Breast epithelium (tissue), 4 donors: ENCODE measurements at regions of chr7 and their contacts with region 1.

Region 1: GRCh38 chr7:726084-726853 is at the start of gene DNAAF5:
- DNase-seq: peak; percentile 53 to 79
- H3K4me3 ChIP-seq: peak within 1 kb of the TSS; percentile 78 to 97 (median 96)
- H3K27ac ChIP-seq: peak within 1 kb of the TSS; percentile 33 to 77
- H3K4me1 ChIP-seq: peaks cover 4 to 8% of the 10 kb centered on the region in 2 donors
- H3K27me3 ChIP-seq: no peaks in the 10 kb centered on the region
- CTCF ChIP-seq: no peak
- POLR2A ChIP-seq: no peak
- total RNA-seq, gene DNAAF5: 14.1 to 29.8 (median 23.6) TPM

Region 2: DNA sequence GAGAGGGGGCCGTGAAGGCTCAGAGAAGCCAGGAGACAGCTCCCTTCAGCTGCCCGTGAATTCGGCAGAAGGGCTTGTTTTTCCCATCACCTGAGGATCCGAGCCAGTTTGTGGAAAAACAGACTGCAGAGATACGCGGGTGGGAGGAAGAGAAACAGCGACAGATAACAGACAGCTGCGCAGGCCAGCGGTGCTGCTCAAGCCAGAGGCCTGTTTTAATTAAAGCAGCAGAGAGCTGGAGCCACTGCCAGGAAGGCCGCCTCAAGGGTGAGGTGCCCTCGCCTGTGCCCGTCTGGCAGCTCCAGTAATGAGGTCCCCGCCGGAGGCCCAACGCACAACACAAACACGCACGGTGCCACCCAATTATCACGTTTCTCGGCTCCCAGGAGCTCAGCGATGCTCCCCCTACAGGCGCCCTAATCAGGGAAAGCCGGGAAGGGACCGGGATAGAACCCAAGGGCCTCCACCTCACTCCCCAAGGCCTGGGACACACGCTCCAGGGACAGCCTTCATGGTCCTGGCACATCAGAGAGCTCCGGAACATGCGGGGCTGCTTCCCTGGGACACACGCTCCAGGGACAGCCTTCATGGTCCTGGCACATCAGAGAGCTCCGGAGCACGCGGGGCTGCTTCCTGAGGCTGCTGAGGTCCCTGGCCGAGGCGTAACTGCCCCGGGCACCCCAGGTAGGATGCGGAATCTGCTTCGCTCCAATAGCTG is 60.4 kb before region 1 on chr7:
- intact Hi-C with region 1: no loop called
- DNase-seq: no peak
- H3K4me3 ChIP-seq: peak overlapping the region in 1 of 3 donors; percentile 4
- H3K27ac ChIP-seq: peak overlapping the region; percentile 42 to 83
- H3K4me1 ChIP-seq: no peaks in the 10 kb centered on the region
- H3K27me3 ChIP-seq: no peaks in the 10 kb centered on the region
- CTCF ChIP-seq: no peak
- POLR2A ChIP-seq: no peak

Region 3: GRCh38 chr7:691368-692040 is 34.8 kb before region 1 on chr7:
- intact Hi-C with region 1: loop called (anchors 2 kb)
- DNase-seq: no peak
- H3K4me3 ChIP-seq: no peak overlapping the region
- H3K27ac ChIP-seq: no peak overlapping the region
- H3K4me1 ChIP-seq: no peaks in the 10 kb centered on the region
- H3K27me3 ChIP-seq: no peaks in the 10 kb centered on the region
- CTCF ChIP-seq: no peak
- POLR2A ChIP-seq: no peak